IMR-90 (cell line): ENCODE measurements at regions of chr2 and their contacts with region 1.

Region 1: DNA sequence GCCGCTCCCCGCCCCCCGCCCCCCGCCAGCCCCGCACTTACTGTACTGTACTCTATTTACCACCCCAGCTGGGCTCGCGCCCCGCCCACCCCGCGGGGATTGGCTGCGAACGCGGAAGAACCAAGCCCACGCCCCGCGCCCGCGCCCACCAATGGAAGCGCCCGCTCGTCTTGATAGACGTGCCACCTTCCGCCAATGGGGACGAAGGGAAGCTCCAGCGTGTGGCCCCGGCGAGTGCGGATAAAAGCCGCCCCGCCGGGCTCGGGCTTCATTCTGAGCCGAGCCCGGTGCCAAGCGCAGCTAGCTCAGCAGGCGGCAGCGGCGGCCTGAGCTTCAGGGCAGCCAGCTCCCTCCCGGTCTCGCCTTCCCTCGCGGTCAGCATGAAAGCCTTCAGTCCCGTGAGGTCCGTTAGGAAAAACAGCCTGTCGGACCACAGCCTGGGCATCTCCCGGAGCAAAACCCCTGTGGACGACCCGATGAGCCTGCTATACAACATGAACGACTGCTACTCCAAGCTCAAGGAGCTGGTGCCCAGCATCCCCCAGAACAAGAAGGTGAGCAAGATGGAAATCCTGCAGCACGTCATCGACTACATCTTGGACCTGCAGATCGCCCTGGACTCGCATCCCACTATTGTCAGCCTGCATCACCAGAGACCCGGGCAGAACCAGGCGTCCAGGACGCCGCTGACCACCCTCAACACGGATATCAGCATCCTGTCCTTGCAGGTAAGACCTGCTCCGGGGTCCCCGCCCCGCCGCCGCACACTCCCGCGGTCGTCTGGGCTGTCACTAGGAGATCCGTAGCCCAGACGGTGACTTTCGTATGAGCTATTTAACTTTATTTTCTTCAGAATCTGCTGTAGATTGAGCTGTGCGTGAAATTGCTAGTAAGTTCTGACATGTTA is at the start of gene ID2:
- DNase-seq: peak; percentile 98
- ATAC-seq: peak; percentile 68
- H3K4me3 ChIP-seq: peak within 1 kb of the TSS; percentile 87
- H3K27ac ChIP-seq: peak within 1 kb of the TSS; percentile 90
- H3K4me1 ChIP-seq: peaks cover 11% of the 10 kb centered on the region
- H3K27me3 ChIP-seq: no peaks in the 10 kb centered on the region
- CTCF ChIP-seq: 0 out of 2 replicates have a peak, but pooled peaks have one; percentile 5
- POLR2A ChIP-seq: peak; percentile 100
- RAD21 ChIP-seq: peak; percentile 50
- total RNA-seq, gene ID2: 389 and 431 TPM in 2 replicates

Region 2: DNA sequence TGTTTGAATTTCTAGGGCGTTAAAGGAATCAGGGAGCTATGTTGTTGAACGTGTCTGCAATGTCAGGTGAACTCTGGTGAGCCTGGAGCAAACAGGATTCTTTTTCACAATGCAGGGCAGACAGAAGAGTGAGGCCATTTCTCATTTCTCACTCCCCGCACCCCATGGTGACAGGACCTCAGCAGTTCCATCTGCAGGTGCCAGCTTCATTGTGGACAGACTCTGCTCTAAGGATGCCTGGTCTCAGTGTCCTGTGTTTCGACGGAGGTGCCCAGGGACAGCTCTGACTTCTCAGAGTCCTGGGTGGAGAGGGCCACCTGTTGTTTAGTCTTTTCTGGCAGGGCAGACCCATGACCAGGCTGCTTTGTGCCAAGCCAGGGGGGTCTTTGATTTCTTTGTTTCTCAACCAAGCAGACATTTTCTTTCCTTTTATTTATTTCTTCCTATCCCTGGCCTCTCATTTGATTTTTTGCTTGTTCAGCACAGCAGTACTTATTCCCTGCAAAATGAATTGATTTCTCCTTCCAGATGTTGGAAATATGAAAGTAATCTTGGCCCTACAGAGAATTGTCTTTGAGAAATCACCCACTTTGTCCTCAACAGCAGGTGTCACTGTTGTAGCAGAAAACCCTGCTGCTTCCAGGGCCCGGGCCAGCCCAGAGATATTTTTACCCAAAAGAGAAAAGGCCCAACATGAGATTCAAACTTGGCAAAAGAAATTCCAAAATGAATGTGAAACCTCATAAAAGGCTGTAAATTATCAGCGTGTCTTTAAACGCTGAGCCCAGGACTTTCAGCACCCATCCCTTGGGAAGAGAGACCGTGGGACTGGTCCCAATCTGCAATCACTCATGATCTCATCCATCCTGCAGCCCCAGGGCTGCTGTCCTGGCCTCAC is 1563.2 kb before region 1 on chr2:
- CTCF ChIA-PET with region 1: no interaction called
- POLR2A ChIA-PET with region 1: no interaction called
- dilution Hi-C with region 1: no loop called
- in situ Hi-C with region 1: loop called (anchors 25 kb)
- intact Hi-C with region 1: no loop called
- DNase-seq: peak; percentile 13
- ATAC-seq: peak; percentile 51; the same call in 1 of the 2 replicates
- H3K4me3 ChIP-seq: no peak overlapping the region
- H3K27ac ChIP-seq: no peak overlapping the region
- H3K4me1 ChIP-seq: no peaks in the 10 kb centered on the region
- H3K27me3 ChIP-seq: no peaks in the 10 kb centered on the region
- CTCF ChIP-seq: peak; percentile 40
- POLR2A ChIP-seq: no peak
- RAD21 ChIP-seq: peak; percentile 41

Region 3: GRCh38 chr2:7835693-7836680 is 846.1 kb before region 1 on chr2:
- CTCF ChIA-PET with region 1: no interaction called
- POLR2A ChIA-PET with region 1: no interaction called
- dilution Hi-C with region 1: no loop called
- in situ Hi-C with region 1: loop called (anchors 25 kb)
- intact Hi-C with region 1: no loop called
- DNase-seq: no peak
- ATAC-seq: no peak
- H3K4me3 ChIP-seq: no peak overlapping the region
- H3K27ac ChIP-seq: no peak overlapping the region
- H3K4me1 ChIP-seq: peaks cover under 1% of the 10 kb centered on the region; the same call in 1 of the 2 replicates
- H3K27me3 ChIP-seq: no peaks in the 10 kb centered on the region
- CTCF ChIP-seq: no peak
- POLR2A ChIP-seq: no peak
- RAD21 ChIP-seq: no peak

Region 4: DNA sequence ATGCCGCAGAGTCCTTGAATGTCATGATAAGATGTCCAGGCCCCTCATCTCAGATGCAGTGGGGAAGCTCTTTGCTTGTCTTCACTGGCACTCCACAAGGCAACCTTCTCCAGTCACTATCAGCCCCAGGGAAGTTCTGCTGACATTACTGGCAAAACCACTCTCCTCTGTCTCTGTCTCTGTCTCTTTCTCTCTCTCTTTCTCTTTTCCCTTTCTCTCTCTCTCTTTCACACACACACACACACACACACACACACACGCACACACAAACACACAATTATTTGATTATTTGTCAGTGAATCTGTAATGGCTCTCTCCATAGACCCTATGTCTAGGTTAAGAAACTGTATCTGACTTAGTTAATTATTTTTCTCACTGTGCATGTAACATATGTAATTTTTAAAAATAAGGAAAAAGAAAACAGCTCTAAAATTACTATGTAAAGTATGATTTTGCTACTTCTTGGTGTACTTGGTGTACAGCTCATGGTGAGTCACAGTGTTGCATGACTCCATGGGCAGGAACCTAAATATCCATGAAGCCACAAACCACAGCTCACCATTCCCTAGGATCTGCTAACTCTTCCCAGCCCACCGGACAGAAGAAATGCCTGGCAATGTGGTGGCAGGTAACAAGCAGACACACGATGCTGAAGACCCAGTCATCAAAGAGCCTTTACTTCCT is 595.1 kb before region 1 on chr2:
- CTCF ChIA-PET with region 1: no interaction called
- POLR2A ChIA-PET with region 1: no interaction called
- dilution Hi-C with region 1: no loop called
- in situ Hi-C with region 1: no loop called
- intact Hi-C with region 1: loop called (anchors 5 kb)
- DNase-seq: peak; percentile 99
- ATAC-seq: peak; percentile 88
- H3K4me3 ChIP-seq: no peak overlapping the region
- H3K27ac ChIP-seq: peak overlapping the region; percentile 60
- H3K4me1 ChIP-seq: peaks cover 24% of the 10 kb centered on the region
- H3K27me3 ChIP-seq: no peaks in the 10 kb centered on the region
- CTCF ChIP-seq: no peak
- POLR2A ChIP-seq: no peak
- RAD21 ChIP-seq: no peak

Region 5: DNA sequence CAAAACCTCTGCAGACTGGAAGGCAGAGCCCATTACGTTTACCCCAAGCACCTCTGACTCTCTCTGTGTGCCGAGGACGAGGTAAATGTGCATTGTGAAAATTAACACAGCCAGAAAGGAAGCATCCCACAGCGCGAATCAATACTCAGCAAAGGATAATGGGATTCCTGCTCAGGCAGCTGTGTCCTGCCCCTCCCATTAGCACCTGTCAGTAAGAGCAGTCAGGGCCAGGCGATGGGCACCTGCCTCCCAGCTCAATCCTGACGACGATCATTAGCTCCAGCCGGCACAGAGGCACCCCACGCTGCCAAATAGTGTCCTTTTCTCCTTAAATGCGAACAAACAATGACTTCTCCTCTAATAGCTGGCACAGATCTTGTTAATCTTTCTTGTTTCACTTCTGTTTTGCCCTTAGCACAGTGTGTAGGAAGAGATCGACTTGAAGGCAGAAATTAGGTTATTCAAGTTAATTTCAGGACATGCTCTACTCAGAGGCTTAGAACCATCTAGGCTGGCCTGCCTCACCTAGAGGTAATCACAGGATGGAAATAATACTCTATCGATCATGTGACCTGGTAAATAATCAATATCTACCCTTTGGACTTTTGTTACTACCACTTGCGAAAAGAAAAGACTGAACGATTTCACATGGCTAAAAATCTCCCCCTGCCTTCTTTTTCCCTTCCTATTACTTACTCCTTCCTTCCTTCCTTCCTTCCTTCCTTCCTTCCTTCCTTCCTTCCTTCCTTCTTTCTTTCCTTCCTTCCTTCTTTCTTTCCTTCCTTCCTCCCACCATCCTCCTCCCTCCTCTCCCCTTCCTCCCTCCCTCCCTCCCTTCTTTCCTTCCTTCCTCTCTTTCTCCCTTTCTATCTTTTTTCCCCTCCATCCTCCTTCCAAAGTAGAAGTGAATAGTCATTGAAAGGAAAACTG is 488.1 kb before region 1 on chr2:
- CTCF ChIA-PET with region 1: no interaction called
- POLR2A ChIA-PET with region 1: no interaction called
- dilution Hi-C with region 1: no loop called
- in situ Hi-C with region 1: no loop called
- intact Hi-C with region 1: loop called (anchors 1 kb)
- DNase-seq: no peak
- ATAC-seq: peak; percentile 7; the same call in 1 of the 2 replicates
- H3K4me3 ChIP-seq: no peak overlapping the region
- H3K27ac ChIP-seq: peak overlapping the region; percentile 25; the same call in 1 of the 2 replicates
- H3K4me1 ChIP-seq: peaks cover 17% of the 10 kb centered on the region
- H3K27me3 ChIP-seq: no peaks in the 10 kb centered on the region
- CTCF ChIP-seq: no peak
- POLR2A ChIP-seq: no peak
- RAD21 ChIP-seq: no peak

Region 6: GRCh38 chr2:8514796-8515758 is 167.0 kb before region 1 on chr2:
- CTCF ChIA-PET with region 1: no interaction called
- POLR2A ChIA-PET with region 1: no interaction called
- dilution Hi-C with region 1: no loop called
- in situ Hi-C with region 1: no loop called
- intact Hi-C with region 1: loop called (anchors 10 kb)
- DNase-seq: no peak
- ATAC-seq: no peak
- H3K4me3 ChIP-seq: no peak overlapping the region
- H3K27ac ChIP-seq: no peak overlapping the region
- H3K4me1 ChIP-seq: peaks cover 3% of the 10 kb centered on the region
- H3K27me3 ChIP-seq: peaks cover 10% of the 10 kb centered on the region; the same call in 1 of the 2 replicates
- CTCF ChIP-seq: no peak
- POLR2A ChIP-seq: no peak
- RAD21 ChIP-seq: no peak

Region 7: DNA sequence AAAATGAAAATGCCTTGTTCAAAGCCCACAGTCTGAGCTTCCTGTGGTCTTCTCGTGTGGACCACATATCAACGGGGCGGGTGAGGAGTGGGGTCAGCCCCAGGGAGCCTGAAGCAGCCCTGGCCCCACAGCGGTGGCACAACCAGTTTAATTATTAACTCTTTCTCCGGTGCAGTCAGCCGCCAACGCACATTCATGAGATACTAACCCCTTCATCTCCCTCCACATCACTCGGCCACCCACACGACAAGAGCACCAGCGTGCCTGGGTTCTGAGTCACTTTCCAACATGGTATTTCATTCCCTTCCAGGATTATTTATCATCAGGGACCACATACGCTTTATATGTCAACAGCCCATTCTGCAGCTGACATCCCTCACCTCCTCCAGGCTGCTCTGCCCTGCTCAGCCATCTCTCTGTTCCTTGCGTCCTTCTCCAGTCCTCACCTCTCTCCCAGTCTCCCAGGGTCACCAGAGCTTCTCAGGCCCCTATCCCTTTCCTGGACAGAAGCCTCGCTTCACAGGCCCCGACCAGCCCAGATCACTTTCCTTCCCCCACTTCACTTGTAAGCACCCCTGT is 48.2 kb before region 1 on chr2:
- CTCF ChIA-PET with region 1: no interaction called
- POLR2A ChIA-PET with region 1: no interaction called
- dilution Hi-C with region 1: no loop called
- in situ Hi-C with region 1: no loop called
- intact Hi-C with region 1: loop called (anchors 1 kb)
- DNase-seq: peak; percentile 96
- ATAC-seq: peak; percentile 66
- H3K4me3 ChIP-seq: no peak overlapping the region
- H3K27ac ChIP-seq: peak overlapping the region; percentile 83
- H3K4me1 ChIP-seq: peaks cover 30% of the 10 kb centered on the region
- H3K27me3 ChIP-seq: no peaks in the 10 kb centered on the region
- CTCF ChIP-seq: no peak
- POLR2A ChIP-seq: no peak
- RAD21 ChIP-seq: no peak